ENCODE measurements at regions of chr6 and their contacts with region 1.

Region 1: DNA sequence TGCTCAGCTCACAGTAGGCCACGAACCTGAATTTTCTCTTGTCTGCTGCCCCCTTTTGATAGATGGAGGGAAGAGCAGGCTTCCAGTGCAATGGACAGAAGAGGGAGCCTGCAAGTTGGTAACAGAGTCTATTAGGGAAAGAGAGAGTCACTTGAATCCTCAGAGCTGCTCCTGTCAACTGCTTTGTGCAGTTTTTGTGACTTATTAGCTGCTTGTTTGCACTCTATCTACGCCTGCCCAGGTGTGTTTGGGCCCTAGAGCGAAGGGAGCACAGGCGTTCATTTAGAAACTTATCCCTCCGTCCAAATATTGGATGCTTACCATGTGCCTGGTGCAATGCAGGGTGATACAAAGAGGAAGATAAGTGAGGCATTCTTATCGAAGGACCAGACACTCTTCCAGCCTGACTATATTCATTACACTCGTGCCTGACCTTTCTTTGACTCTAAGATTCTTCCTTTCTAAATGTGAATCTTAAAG is 11.6 kb upstream of the SLC2A12 start:
- DNase-seq: no peak
- H3K4me3 ChIP-seq: no peak overlapping the region
- H3K27ac ChIP-seq: no peak overlapping the region
- H3K4me1 ChIP-seq: peaks cover 2 to 12% (median 10%) of the 10 kb centered on the region in 4 experiments; a peak in 6 of 7 replicates
- H3K27me3 ChIP-seq: no peaks in the 10 kb centered on the region
- CTCF ChIP-seq: peak; percentile 61 to 97 (median 94)
- EP300 ChIP-seq: no peak
- POLR2A ChIP-seq: no peak
- RAD21 ChIP-seq: peak; percentile 75 to 83

Region 2: DNA sequence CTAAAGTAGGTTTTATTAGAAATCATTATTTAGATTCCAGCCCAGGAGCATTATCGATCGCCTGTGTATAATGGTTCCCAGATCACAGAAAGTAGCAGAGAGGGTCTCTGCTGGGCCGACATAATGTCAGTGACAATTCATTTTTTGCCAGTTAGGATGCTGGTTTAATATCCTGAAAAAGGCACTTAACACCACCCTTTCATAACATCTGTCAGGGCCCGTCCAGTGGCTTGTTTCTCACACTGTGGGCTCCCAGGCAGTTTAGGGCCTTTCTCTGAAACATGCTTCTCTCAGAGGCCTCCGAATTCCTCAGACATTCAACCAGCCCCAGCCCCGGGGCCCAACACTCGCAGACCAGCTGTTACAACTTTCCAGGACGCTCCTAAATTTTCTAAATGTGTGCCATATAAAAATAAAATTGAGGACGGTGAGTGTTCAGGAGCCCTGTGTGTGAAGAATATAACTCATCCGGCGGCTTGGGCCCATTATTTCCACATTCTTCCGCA is 931.5 kb before region 1 on chr6:
- CTCF ChIA-PET with region 1: no interaction called
- POLR2A ChIA-PET with region 1: no interaction called
- DNase-seq: no peak
- H3K4me3 ChIP-seq: no peak overlapping the region
- H3K27ac ChIP-seq: no peak overlapping the region
- H3K4me1 ChIP-seq: no peaks in the 10 kb centered on the region
- H3K27me3 ChIP-seq: no peaks in the 10 kb centered on the region
- CTCF ChIP-seq: no peak
- EP300 ChIP-seq: no peak
- POLR2A ChIP-seq: no peak
- RAD21 ChIP-seq: no peak

Region 3: GRCh38 chr6:133952815-133953633 is 111.0 kb before region 1 on chr6 and contains the start of gene TBPL1:
- CTCF ChIA-PET with region 1: interaction called, 20 read pairs
- POLR2A ChIA-PET with region 1: interaction called, 3 read pairs
- DNase-seq: peak; percentile 86 to 93
- H3K4me3 ChIP-seq: peak within 1 kb of the TSS; percentile 81 to 92 (median 88)
- H3K27ac ChIP-seq: peak within 1 kb of the TSS; percentile 74; the same call in 1 of the 2 replicates
- H3K4me1 ChIP-seq: peaks cover 0 to 10% (median 3%) of the 10 kb centered on the region in 4 experiments; a peak in 6 of 7 replicates
- H3K27me3 ChIP-seq: no peaks in the 10 kb centered on the region; a peak in 1 of 7 replicates
- CTCF ChIP-seq: no peak
- EP300 ChIP-seq: peak in 1 of 2 experiments; percentile 52; a peak in 1 of 3 replicates
- POLR2A ChIP-seq: peak; percentile 57 to 93
- RAD21 ChIP-seq: no peak
- total RNA-seq, gene TBPL1: 66.3 and 67.0 TPM in 2 replicates

Region 4: GRCh38 chr6:133973109-133973971 is 90.7 kb before region 1 on chr6:
- CTCF ChIA-PET with region 1: interaction called, 156 read pairs
- POLR2A ChIA-PET with region 1: interaction called, 3 read pairs
- DNase-seq: no peak
- H3K4me3 ChIP-seq: no peak overlapping the region
- H3K27ac ChIP-seq: no peak overlapping the region
- H3K4me1 ChIP-seq: peaks cover 0 to 7% (median 0%) of the 10 kb centered on the region in 4 experiments; a peak in 3 of 7 replicates
- H3K27me3 ChIP-seq: no peaks in the 10 kb centered on the region
- CTCF ChIP-seq: peak in 2 of 3 experiments; percentile 38 to 53; a peak in 2 of 4 replicates
- EP300 ChIP-seq: no peak
- POLR2A ChIP-seq: no peak
- RAD21 ChIP-seq: peak; percentile 71 to 75

Region 5: DNA sequence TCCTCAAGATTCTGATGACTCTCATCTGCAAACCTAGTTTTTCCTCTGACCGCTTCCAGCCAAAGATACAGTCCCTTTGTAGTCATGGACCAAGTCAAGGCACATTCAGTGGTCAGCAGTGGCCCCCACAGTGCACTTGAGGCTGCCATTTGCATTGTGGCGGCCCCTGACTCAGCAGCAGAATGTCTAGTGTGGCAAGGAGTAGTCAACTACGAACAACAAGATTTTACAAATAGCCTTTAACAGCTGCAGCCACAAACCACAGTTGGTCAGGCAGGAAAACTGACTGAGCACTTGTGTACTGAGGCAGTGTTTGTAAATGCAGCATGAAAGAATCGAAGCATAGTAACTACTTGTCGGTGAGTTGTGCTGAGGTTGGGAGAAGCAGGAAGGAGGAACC is 61.2 kb before region 1 on chr6:
- CTCF ChIA-PET with region 1: interaction called, 43 read pairs
- POLR2A ChIA-PET with region 1: no interaction called
- DNase-seq: no peak
- H3K4me3 ChIP-seq: no peak overlapping the region
- H3K27ac ChIP-seq: no peak overlapping the region
- H3K4me1 ChIP-seq: peaks cover 0 to 3% (median 1%) of the 10 kb centered on the region in 4 experiments; a peak in 2 of 7 replicates
- H3K27me3 ChIP-seq: no peaks in the 10 kb centered on the region
- CTCF ChIP-seq: no peak
- EP300 ChIP-seq: no peak
- POLR2A ChIP-seq: no peak
- RAD21 ChIP-seq: no peak

Region 6: GRCh38 chr6:134029495-134030455 is 34.2 kb before region 1 on chr6:
- CTCF ChIA-PET with region 1: interaction called, 17 read pairs
- POLR2A ChIA-PET with region 1: no interaction called
- DNase-seq: no peak
- H3K4me3 ChIP-seq: no peak overlapping the region
- H3K27ac ChIP-seq: no peak overlapping the region
- H3K4me1 ChIP-seq: no peaks in the 10 kb centered on the region
- H3K27me3 ChIP-seq: no peaks in the 10 kb centered on the region
- CTCF ChIP-seq: no peak
- EP300 ChIP-seq: no peak
- POLR2A ChIP-seq: no peak
- RAD21 ChIP-seq: no peak

Region 7: DNA sequence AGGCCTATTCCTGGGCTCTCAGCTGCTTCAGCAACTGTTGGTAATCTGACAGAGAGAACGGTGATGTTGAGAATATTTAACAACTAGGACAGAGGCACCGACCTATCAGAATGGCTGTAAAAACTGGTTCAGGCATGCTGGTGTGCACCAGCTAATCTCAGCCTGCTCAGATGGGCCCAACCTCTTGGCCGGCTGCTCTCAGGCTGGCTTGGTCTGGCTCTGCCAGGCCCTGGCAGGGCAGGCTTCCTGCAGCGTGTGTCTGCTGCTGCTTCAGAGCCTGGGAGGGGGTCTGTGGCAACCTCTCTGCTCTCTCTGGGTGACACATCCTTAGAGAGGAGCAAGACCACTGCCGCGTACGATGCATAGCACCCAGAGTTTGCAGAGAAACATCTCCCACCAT is 16.3 kb before region 1 on chr6:
- CTCF ChIA-PET with region 1: interaction called, 144 read pairs
- POLR2A ChIA-PET with region 1: interaction called, 5 read pairs
- DNase-seq: no peak
- H3K4me3 ChIP-seq: no peak overlapping the region
- H3K27ac ChIP-seq: no peak overlapping the region
- H3K4me1 ChIP-seq: peaks cover 0 to 5% (median 4%) of the 10 kb centered on the region in 4 experiments; a peak in 3 of 7 replicates
- H3K27me3 ChIP-seq: no peaks in the 10 kb centered on the region
- CTCF ChIP-seq: no peak
- EP300 ChIP-seq: no peak
- POLR2A ChIP-seq: no peak
- RAD21 ChIP-seq: no peak

Region 8: DNA sequence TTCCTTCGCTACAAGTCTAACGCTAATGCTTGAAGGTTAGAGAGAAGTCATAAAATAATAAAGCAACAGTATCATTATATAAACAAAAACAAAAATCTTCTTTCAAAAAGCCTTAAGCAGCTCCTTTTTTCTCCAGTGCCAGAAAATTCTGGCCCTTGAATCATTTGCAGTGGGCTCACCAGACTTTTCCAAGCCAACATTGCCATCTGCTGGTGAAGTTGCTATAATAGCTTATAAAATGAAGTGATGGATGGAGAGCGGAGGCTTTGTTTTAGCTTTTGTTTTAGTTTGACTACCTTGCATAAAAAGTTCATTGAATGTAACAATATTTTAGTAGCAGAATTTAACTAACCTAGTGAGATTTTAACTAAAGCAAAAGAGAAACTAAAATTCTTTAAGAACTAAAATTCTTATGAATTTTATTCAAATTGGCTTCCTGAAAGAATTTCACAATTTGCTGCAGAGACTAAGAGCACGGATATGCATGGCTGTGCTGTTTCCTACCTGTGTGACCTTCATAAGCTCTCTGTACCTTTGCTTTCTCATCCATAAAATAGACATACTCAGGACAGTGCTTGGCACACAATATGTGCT is 33.2 kb after region 1 on chr6:
- CTCF ChIA-PET with region 1: interaction called, 96 read pairs
- POLR2A ChIA-PET with region 1: interaction called, 5 read pairs
- DNase-seq: peak in 1 of 2 experiments; percentile 71
- H3K4me3 ChIP-seq: no peak overlapping the region
- H3K27ac ChIP-seq: no peak overlapping the region
- H3K4me1 ChIP-seq: no peaks in the 10 kb centered on the region
- H3K27me3 ChIP-seq: peaks cover 0 to under 1% (median 0%) of the 10 kb centered on the region in 4 experiments; a peak in 1 of 7 replicates
- CTCF ChIP-seq: peak in 2 of 3 experiments; percentile 63 to 69; a peak in 3 of 4 replicates
- EP300 ChIP-seq: no peak
- POLR2A ChIP-seq: no peak
- RAD21 ChIP-seq: peak; percentile 96 to 98